Pancreas (tissue), 10 donors: ENCODE measurements at regions of chr11 and their contacts with region 1.

Region 1: DNA sequence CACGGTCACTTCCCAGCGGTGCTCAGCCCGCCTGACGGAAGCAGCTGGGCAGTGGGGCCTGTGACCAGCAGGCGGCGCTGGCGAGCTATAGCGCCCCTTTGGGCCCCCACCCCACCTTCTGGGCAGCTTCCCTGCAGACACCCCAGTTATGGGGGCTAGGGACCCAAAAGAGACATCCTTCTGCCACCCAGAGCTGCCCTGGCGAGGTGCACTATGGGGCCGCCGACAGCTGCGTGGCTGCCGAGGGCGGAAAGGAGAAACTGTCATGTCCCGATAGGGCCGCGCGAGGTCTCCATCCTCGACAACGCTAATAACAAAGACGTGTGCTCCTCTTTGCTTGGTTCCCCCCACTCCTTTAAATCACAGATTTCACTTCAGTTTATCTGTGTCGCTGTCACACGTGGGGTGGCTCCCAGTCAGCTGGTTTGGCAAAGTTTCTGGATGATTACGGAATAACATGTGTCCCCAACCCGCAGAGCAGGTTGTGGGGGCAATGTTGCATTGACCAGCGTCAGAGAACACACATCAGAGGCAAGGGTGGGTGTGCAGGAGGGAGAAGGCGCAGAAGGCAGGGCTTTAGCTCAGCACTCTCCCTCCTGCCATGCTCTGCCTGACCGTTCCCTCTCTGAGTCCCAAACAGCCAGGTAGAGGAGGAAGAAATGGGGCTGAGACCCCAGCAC is 674 bp upstream of the MYO7A start:
- DNase-seq: peak in 5 of 6 donors; percentile 50 to 91 (median 73)
- ATAC-seq: peak; percentile 74 to 84 (median 78)
- H3K4me3 ChIP-seq: peak overlapping the region; percentile 18 to 52 (median 32)
- H3K27ac ChIP-seq: peak overlapping the region in 3 of 4 donors; percentile 27 to 79 (median 63)
- H3K4me1 ChIP-seq: peaks cover 0 to 8% (median 5%) of the 10 kb centered on the region in 3 donors
- H3K27me3 ChIP-seq: no peaks in the 10 kb centered on the region
- CTCF ChIP-seq: peak; percentile 99

Region 2: DNA sequence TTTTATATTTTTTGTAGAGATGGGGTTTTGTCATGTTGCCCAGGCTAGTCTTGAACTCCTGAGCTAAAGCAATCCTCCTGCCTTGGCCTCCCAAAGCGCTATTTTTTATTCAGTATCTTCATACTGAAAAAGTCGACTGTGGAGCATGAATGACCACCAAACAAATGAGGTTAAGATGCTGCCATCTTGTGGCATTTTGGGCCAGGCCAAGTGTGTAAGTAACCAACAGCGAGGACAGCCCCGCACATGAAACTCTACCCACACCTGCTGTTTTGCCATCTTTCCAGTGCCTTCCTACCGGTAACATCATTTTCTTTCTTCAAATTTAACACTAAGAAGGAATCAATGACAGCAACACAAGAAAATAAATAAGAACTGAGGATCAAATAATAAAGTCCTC is 430.2 kb after region 1 on chr11:
- intact Hi-C with region 1: loop called in 1 of 3 experiments (anchors 10 kb)
- DNase-seq: no peak
- ATAC-seq: no peak
- H3K4me3 ChIP-seq: no peak overlapping the region
- H3K27ac ChIP-seq: no peak overlapping the region
- H3K4me1 ChIP-seq: no peaks in the 10 kb centered on the region
- H3K27me3 ChIP-seq: no peaks in the 10 kb centered on the region
- CTCF ChIP-seq: no peak